ENCODE measurements at regions of chr2 and their contacts with region 1.

Region 1: DNA sequence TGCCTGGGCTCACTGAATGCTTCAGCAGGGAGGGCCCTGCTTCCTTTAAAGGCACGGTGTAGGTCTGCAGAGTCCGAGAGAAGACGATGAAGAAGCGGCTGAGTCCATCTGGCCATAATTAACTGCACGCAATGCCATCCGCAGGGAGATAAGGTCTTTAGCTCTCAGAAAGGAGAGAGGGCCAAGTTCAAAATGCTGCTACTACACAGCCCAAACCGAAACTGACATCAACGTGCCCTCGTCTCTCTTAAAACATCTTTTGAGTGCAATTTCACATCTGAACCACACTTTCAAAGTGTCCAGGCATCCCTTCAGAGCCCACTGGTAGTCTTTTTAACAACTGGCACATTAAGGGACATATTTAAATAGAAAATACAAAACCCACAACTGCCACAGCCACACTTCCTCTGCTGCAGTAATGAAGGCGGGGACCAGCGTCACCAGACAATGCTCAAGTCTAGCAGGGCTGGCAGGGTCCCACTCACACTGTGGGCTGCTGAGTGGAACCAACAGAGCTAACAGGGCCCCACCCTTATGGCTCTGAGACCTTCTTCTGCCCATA is 35.8 kb downstream of the ST3GAL5 start:
- DNase-seq: peak; percentile 35 to 77 (median 63)
- ATAC-seq: peak; percentile 92
- H3K4me3 ChIP-seq: peak overlapping the region; percentile 36
- H3K4me3 Mint-ChIP-seq: peak overlapping the region; percentile 80 to 94 (median 86)
- H3K27ac ChIP-seq: peak overlapping the region; percentile 91
- H3K27ac Mint-ChIP-seq: peak overlapping the region; percentile 98 to 100 (median 100)
- H3K4me1 ChIP-seq: peaks cover 54% of the 10 kb centered on the region in 2 donors
- H3K4me1 Mint-ChIP-seq: peaks cover 48 to 84% (median 68%) of the 10 kb centered on the region in 7 donors
- H3K27me3 ChIP-seq: no peaks in the 10 kb centered on the region
- H3K27me3 Mint-ChIP-seq: no peaks in the 10 kb centered on the region

Region 2: GRCh38 chr2:85772019-85772745 is 80.8 kb before region 1 on chr2:
- CTCF ChIA-PET with region 1: no interaction called
- POLR2A ChIA-PET with region 1: no interaction called
- intact Hi-C with region 1: no loop called
- DNase-seq: no peak
- ATAC-seq: no peak
- H3K4me3 ChIP-seq: no peak overlapping the region
- H3K4me3 Mint-ChIP-seq: no peak overlapping the region
- H3K27ac ChIP-seq: no peak overlapping the region
- H3K27ac Mint-ChIP-seq: no peak overlapping the region
- H3K4me1 ChIP-seq: no peaks in the 10 kb centered on the region
- H3K4me1 Mint-ChIP-seq: peaks cover 0 to 8% (median 3%) of the 10 kb centered on the region in 7 donors
- H3K27me3 ChIP-seq: no peaks in the 10 kb centered on the region
- H3K27me3 Mint-ChIP-seq: peaks cover 20 to 39% (median 29%) of the 10 kb centered on the region in 5 donors

Region 3: DNA sequence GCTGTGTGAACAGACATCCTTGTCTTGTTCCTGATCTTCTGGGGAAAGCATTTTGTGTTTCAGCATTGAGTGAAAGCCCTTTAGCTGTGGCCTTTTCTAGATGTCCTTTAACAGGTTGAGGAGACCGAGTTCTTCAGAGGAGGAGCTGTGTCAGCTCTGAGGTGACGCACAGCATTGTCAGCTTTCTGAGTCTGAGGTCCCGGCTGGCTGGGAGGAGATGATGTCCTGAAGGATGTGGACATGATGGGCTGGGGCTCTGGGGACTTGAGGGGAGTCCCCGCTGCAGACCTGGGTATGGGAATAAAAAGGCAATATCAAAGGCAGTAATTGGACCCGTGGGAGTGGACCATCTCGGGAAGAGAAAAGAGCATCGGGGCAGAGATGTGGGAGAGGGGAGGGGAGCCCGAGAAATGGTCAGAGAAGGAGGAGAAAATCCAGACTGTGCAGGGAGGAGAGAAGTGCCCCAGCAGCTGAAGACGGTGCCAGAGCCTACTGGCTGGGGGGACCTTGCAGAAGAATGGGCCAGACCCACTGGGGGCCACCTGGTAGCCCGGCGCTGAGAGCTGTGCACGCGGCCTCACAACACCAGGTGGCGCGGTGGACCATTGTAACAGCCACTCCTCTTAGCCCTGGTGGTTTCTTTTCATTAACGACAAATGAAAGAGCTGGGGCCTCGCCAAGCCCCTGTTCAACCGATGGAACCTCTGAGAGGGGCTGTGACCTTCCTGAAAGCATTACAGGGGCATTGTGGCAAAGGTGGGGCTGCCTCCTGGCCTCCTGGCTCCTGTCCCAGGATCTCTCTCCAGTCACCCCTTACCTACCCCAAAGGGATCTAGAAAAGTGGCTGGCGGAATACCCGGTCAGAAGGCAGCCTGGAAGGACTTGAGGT is 25.8 kb before region 1 on chr2:
- CTCF ChIA-PET with region 1: interaction called, 16 read pairs
- POLR2A ChIA-PET with region 1: interaction called, 9 read pairs
- intact Hi-C with region 1: loop called (anchors 1 to 2 kb)
- DNase-seq: peak; percentile 64 to 83 (median 79)
- ATAC-seq: peak; percentile 99
- H3K4me3 ChIP-seq: peak overlapping the region; percentile 49
- H3K4me3 Mint-ChIP-seq: peak overlapping the region in 7 of 10 donors; percentile 8 to 65 (median 55)
- H3K27ac ChIP-seq: no peak overlapping the region
- H3K27ac Mint-ChIP-seq: peak overlapping the region in 8 of 9 donors; percentile 7 to 70 (median 63)
- H3K4me1 ChIP-seq: peaks cover 4 to 5% of the 10 kb centered on the region in 2 donors
- H3K4me1 Mint-ChIP-seq: peaks cover 18 to 31% (median 25%) of the 10 kb centered on the region in 7 donors
- H3K27me3 ChIP-seq: no peaks in the 10 kb centered on the region
- H3K27me3 Mint-ChIP-seq: peaks cover 0 to 31% (median 0%) of the 10 kb centered on the region in 5 donors

Region 4: DNA sequence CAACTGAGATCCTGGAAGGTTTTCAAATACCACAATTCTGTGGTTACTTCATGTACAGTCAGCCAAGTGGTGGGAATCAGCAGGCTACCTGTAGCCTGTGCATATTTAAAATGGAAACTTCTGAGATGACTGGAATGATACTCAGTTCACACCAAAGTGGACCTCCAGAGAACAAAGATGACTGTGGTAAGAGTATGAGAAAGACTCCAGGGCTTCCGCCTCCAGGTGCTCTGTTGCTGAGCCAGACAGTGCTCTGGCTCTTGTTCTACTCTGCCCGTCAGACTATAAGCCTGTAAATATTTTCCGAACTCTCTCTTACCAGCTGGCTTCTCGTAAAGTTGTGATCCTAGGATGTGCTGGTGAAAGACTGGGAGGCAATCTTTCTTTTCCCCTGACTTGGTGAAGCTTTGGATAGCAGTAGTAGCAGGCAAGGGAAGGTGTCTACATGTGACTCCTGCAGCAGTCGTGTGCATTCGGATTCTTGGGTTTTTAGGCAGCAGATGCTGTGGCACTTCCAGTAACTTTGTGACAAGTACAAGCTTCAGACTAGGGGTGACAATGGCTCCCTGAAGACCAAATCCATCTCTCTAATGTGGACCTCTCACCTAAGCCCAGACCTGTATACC is 12.6 kb after region 1 on chr2:
- CTCF ChIA-PET with region 1: no interaction called
- POLR2A ChIA-PET with region 1: interaction called, 10 read pairs
- intact Hi-C with region 1: loop called (anchors 1 kb)
- DNase-seq: no peak
- ATAC-seq: no peak
- H3K4me3 ChIP-seq: no peak overlapping the region
- H3K4me3 Mint-ChIP-seq: peak overlapping the region in 1 of 10 donors; percentile 38
- H3K27ac ChIP-seq: no peak overlapping the region
- H3K27ac Mint-ChIP-seq: peak overlapping the region; percentile 1 to 94 (median 51)
- H3K4me1 ChIP-seq: peaks cover 15 to 32% of the 10 kb centered on the region in 2 donors
- H3K4me1 Mint-ChIP-seq: peaks cover 19 to 84% (median 62%) of the 10 kb centered on the region in 7 donors
- H3K27me3 ChIP-seq: no peaks in the 10 kb centered on the region
- H3K27me3 Mint-ChIP-seq: no peaks in the 10 kb centered on the region

Region 5: GRCh38 chr2:85999061-85999831 is 146.2 kb after region 1 on chr2:
- CTCF ChIA-PET with region 1: no interaction called
- POLR2A ChIA-PET with region 1: no interaction called
- intact Hi-C with region 1: loop called in 1 of 2 experiments (anchors 5 kb)
- DNase-seq: peak in 8 of 9 donors; percentile 25 to 62 (median 46)
- ATAC-seq: peak; percentile 83
- H3K4me3 ChIP-seq: peak overlapping the region; percentile 33
- H3K4me3 Mint-ChIP-seq: peak overlapping the region; percentile 55 to 83 (median 68)
- H3K27ac ChIP-seq: peak overlapping the region; percentile 66
- H3K27ac Mint-ChIP-seq: peak overlapping the region; percentile 85 to 96 (median 93)
- H3K4me1 ChIP-seq: peaks cover 48 to 52% of the 10 kb centered on the region in 2 donors
- H3K4me1 Mint-ChIP-seq: peaks cover 36 to 79% (median 64%) of the 10 kb centered on the region in 7 donors
- H3K27me3 ChIP-seq: no peaks in the 10 kb centered on the region
- H3K27me3 Mint-ChIP-seq: no peaks in the 10 kb centered on the region

Region 6: GRCh38 chr2:86195055-86195807 is 342.2 kb after region 1 on chr2 and contains the start of gene IMMT:
- CTCF ChIA-PET with region 1: no interaction called
- POLR2A ChIA-PET with region 1: no interaction called
- intact Hi-C with region 1: loop called (anchors 2 to 10 kb)
- DNase-seq: peak; percentile 86 to 96 (median 94)
- ATAC-seq: peak; percentile 94
- H3K4me3 ChIP-seq: peak within 1 kb of the TSS; percentile 74
- H3K4me3 Mint-ChIP-seq: peak within 1 kb of the TSS; percentile 86 to 99 (median 95)
- H3K27ac ChIP-seq: peak within 1 kb of the TSS; percentile 97
- H3K27ac Mint-ChIP-seq: peak within 1 kb of the TSS; percentile 82 to 97 (median 90)
- H3K4me1 ChIP-seq: peaks cover 15 to 23% of the 10 kb centered on the region in 2 donors
- H3K4me1 Mint-ChIP-seq: peaks cover 35 to 74% (median 60%) of the 10 kb centered on the region in 7 donors
- H3K27me3 ChIP-seq: no peaks in the 10 kb centered on the region
- H3K27me3 Mint-ChIP-seq: no peaks in the 10 kb centered on the region
- total RNA-seq, gene IMMT: 59.2 to 164 (median 77.0) TPM

Region 7: DNA sequence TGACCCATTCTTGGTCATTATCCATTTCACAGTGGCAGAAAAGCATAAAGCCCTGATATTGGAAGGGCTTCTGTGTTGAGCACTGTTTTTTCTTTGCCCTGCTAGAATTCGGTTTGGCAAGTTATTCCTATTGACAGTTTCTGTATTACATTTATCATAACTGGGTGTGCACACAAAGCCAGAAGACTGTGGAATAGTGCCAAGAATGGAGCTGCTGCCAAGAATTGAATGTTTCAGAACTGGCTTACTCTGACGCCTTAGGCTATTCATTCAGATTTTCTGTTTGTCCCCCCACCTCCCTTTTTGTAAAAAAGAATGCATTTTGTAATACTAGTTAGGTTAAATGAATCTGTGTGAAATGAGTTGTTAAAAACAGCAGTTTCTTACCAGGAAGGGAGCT is 600.8 kb after region 1 on chr2:
- CTCF ChIA-PET with region 1: no interaction called
- POLR2A ChIA-PET with region 1: no interaction called
- intact Hi-C with region 1: no loop called
- DNase-seq: no peak
- ATAC-seq: no peak
- H3K4me3 ChIP-seq: no peak overlapping the region
- H3K4me3 Mint-ChIP-seq: no peak overlapping the region
- H3K27ac ChIP-seq: no peak overlapping the region
- H3K27ac Mint-ChIP-seq: no peak overlapping the region
- H3K4me1 ChIP-seq: peaks cover 0 to 7% of the 10 kb centered on the region in 2 donors
- H3K4me1 Mint-ChIP-seq: peaks cover 21 to 59% (median 42%) of the 10 kb centered on the region in 7 donors
- H3K27me3 ChIP-seq: no peaks in the 10 kb centered on the region
- H3K27me3 Mint-ChIP-seq: no peaks in the 10 kb centered on the region

Measured in naive thymus-derived CD4-positive, alpha-beta T cell (primary cell).